ENCODE measurements at regions of chr6 and their contacts with region 1.

Region 1: DNA sequence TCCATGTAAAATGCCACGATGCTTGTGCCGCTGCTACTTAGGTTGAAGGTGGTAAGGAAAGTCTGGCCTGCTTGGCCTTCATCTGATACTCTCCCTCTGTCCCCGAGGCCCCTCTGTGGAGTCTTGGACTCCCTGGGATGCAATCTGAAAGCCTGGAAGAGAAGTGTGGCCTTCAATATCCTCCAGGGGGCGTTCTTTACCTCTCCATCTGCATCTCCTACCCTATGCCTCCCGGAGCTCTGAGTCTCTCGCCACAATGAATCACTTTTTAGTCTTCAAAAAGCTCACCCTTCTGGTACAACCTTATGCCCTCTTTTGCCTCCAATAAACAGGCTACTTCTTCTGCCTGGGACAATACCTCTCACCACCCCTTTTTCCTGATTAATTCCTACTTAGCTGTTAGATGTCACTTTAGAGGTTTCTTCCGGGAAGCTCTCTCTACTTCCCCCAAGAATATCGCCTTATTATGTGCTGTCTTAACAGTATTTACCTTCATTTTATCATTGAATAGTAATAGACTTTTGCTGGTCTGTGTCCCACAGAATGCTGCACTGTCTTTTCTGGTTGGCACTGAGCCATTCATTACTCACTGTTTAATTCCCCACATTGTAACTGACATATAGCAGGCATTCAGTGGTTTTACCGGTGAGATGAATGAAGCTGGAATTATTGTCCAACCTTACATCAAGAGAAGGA is 13.9 kb upstream of the ATG5 start:
- DNase-seq: peak; percentile 65
- H3K4me3 ChIP-seq: no peak overlapping the region
- H3K27ac ChIP-seq: no peak overlapping the region
- H3K4me1 ChIP-seq: no peaks in the 10 kb centered on the region
- H3K27me3 ChIP-seq: no peaks in the 10 kb centered on the region
- CTCF ChIP-seq: peak; percentile 66

Region 2: GRCh38 chr6:106421496-106421895 is 82.0 kb after region 1 on chr6:
- intact Hi-C with region 1: no loop called
- DNase-seq: no peak
- H3K4me3 ChIP-seq: no peak overlapping the region
- H3K27ac ChIP-seq: no peak overlapping the region
- H3K4me1 ChIP-seq: no peaks in the 10 kb centered on the region
- H3K27me3 ChIP-seq: no peaks in the 10 kb centered on the region
- CTCF ChIP-seq: no peak

Region 3: DNA sequence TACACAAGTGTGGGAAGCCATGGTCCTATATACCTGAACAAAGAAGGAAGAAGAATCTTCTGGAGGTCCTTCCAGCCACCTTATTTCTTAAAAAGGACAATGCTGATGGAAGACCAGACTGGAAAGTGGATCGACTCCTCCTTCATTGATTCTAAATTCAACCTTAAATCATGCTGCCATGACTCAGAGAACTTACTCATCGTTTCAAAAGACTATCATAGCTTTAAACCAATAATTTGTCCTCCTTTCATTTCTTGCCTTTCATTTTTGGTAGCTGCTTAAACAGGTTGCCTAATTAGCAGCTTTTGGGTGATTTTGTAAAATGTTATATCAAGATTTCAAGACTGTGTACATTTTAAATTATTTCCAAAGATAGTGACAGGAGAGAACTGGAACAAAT is 229.0 kb after region 1 on chr6:
- intact Hi-C with region 1: loop called (anchors 5 kb)
- DNase-seq: no peak
- H3K4me3 ChIP-seq: no peak overlapping the region
- H3K27ac ChIP-seq: no peak overlapping the region
- H3K4me1 ChIP-seq: no peaks in the 10 kb centered on the region
- H3K27me3 ChIP-seq: no peaks in the 10 kb centered on the region
- CTCF ChIP-seq: no peak

Region 4: DNA sequence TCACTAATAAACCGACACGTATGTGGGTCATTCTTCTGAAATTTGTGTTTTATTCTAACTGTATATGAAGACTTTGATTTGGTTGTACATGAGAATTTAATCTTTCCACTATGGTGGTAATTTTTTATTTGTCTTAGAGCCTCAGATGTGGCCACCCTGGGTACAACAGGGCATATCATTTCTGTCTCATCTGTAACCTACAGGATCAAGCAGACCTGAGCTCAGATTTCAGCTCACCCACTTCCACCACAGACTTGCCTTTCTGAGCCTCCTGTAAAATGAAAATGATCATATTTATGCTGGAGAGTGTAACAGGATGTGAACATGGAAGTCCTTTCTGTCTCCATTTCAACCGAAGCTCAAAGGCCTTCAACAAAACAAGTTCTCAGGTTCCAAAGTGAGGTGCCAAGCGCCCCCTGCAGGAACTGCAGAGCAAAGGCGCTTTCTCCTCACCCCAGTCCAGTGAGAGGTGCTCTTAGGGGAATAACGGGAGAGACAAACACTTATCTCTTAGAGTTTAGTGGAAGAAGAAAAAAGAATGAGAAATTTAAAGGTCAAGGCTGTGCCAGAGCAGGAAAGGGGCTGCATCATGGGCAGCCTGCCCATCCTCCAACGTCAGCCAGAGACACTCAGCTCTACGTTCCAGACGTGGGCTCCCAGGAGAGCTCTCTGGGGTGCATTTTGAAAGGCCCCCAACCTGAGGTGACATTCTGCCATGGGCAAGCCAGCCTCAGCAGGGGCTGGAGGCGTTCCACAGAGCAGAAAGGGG is 658.1 kb after region 1 on chr6:
- intact Hi-C with region 1: loop called (anchors 5 kb)
- DNase-seq: peak; percentile 62
- H3K4me3 ChIP-seq: no peak overlapping the region
- H3K27ac ChIP-seq: no peak overlapping the region
- H3K4me1 ChIP-seq: no peaks in the 10 kb centered on the region
- H3K27me3 ChIP-seq: no peaks in the 10 kb centered on the region
- CTCF ChIP-seq: peak; percentile 72